PC-9 (cell line): ENCODE measurements at regions of chr7 and their contacts with region 1.

Region 1: GRCh38 chr7:13920053-13920697 is 69.3 kb downstream of the ETV1 start:
- DNase-seq: peak; percentile 69 to 100
- H3K4me3 ChIP-seq: peak overlapping the region; percentile 7; the same call in 1 of the 2 replicates
- H3K27ac ChIP-seq: peak overlapping the region; percentile 76
- H3K4me1 ChIP-seq: peaks cover 20% of the 10 kb centered on the region
- H3K27me3 ChIP-seq: no peaks in the 10 kb centered on the region
- CTCF ChIP-seq: no peak

Region 2: DNA sequence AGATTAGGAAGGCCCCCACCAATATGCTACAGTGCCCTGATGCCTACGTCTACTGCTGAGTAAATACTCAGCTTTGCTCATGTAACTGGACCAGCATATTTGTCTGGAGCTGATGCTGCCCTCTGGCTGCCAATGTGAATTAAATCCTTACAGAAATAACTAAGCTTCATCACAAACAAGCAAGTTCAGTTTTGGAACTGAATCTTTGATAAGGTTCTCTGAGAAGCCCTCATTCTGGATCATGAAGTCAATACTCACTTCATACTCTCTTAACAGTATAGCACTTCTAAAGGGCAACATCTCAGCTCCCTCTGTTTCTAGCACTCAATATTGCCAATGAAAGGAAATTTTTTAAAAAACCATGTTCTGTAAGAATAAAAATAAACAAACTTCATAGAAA is 177.4 kb before region 1 on chr7:
- CTCF ChIA-PET with region 1: no interaction called
- POLR2A ChIA-PET with region 1: no interaction called
- intact Hi-C with region 1: loop called (anchors 1 kb)
- DNase-seq: peak in 1 of 2 experiments; percentile 23
- H3K4me3 ChIP-seq: no peak overlapping the region
- H3K27ac ChIP-seq: no peak overlapping the region
- H3K4me1 ChIP-seq: no peaks in the 10 kb centered on the region
- H3K27me3 ChIP-seq: no peaks in the 10 kb centered on the region
- CTCF ChIP-seq: peak; percentile 64; the same call in 1 of the 2 replicates

Region 3: GRCh38 chr7:13850185-13850752 is 69.9 kb before region 1 on chr7:
- CTCF ChIA-PET with region 1: no interaction called
- POLR2A ChIA-PET with region 1: no interaction called
- intact Hi-C with region 1: loop called (anchors 1 kb)
- DNase-seq: peak; percentile 51 to 91
- H3K4me3 ChIP-seq: no peak overlapping the region
- H3K27ac ChIP-seq: peak overlapping the region; percentile 33
- H3K4me1 ChIP-seq: peaks cover 11% of the 10 kb centered on the region
- H3K27me3 ChIP-seq: no peaks in the 10 kb centered on the region
- CTCF ChIP-seq: no peak

Region 4: GRCh38 chr7:13860734-13861133 is 59.4 kb before region 1 on chr7:
- CTCF ChIA-PET with region 1: no interaction called
- POLR2A ChIA-PET with region 1: no interaction called
- intact Hi-C with region 1: no loop called
- DNase-seq: no peak
- H3K4me3 ChIP-seq: no peak overlapping the region
- H3K27ac ChIP-seq: no peak overlapping the region
- H3K4me1 ChIP-seq: no peaks in the 10 kb centered on the region
- H3K27me3 ChIP-seq: no peaks in the 10 kb centered on the region
- CTCF ChIP-seq: no peak

Region 5: DNA sequence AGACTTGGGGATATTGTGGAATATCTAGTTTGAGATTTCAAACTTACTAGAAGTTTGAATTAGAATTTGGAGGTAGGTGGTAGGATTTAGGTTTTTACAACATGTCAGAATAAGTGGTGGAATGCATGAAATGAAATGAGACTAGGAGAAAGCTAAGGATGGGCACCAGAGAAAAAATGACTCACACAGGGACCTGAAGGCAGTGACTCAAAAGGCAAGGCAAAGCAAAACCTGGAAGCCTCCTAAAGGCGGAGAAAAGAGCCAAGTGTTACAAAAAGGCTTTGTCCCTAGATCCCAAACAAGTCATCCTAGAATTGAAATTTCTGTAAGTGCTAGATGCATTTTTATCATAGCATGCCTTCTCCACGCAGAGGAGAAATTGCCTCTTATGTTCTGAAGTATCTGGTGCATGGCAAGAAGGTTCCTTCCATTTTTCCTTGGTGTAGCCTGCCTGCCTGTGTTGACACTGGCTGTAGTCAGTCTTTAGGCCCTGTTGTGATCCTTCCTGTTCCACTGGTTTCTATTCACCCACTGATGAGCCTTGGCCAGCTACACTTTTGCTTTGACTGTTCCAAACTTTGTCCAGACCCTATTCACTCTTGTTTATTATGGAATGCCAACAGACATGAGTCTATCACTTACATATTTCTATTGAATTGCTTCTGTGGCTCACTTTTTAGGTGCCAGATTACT is 40.0 kb before region 1 on chr7:
- CTCF ChIA-PET with region 1: no interaction called
- POLR2A ChIA-PET with region 1: no interaction called
- intact Hi-C with region 1: loop called (anchors 1 kb)
- DNase-seq: peak; percentile 44 to 49
- H3K4me3 ChIP-seq: no peak overlapping the region
- H3K27ac ChIP-seq: no peak overlapping the region
- H3K4me1 ChIP-seq: 0 out of 2 replicates have a peak, but pooled peaks cover 4% of the 10 kb centered on the region
- H3K27me3 ChIP-seq: no peaks in the 10 kb centered on the region
- CTCF ChIP-seq: no peak

Region 6: GRCh38 chr7:13981070-13981469 is 60.9 kb after region 1 on chr7:
- CTCF ChIA-PET with region 1: no interaction called
- POLR2A ChIA-PET with region 1: no interaction called
- intact Hi-C with region 1: loop called (anchors 1 kb)
- DNase-seq: peak; percentile 72 to 89
- H3K4me3 ChIP-seq: no peak overlapping the region
- H3K27ac ChIP-seq: no peak overlapping the region
- H3K4me1 ChIP-seq: peaks cover 14% of the 10 kb centered on the region; the same call in 1 of the 2 replicates
- H3K27me3 ChIP-seq: no peaks in the 10 kb centered on the region
- CTCF ChIP-seq: no peak

Region 7: GRCh38 chr7:14457568-14458453 is 537.6 kb after region 1 on chr7:
- CTCF ChIA-PET with region 1: no interaction called
- POLR2A ChIA-PET with region 1: interaction called, 11 read pairs
- intact Hi-C with region 1: no loop called
- DNase-seq: peak; percentile 66 to 68
- H3K4me3 ChIP-seq: peak overlapping the region; percentile 6; the same call in 1 of the 2 replicates
- H3K27ac ChIP-seq: no peak overlapping the region
- H3K4me1 ChIP-seq: no peaks in the 10 kb centered on the region
- H3K27me3 ChIP-seq: no peaks in the 10 kb centered on the region
- CTCF ChIP-seq: peak; percentile 98

Region 8: DNA sequence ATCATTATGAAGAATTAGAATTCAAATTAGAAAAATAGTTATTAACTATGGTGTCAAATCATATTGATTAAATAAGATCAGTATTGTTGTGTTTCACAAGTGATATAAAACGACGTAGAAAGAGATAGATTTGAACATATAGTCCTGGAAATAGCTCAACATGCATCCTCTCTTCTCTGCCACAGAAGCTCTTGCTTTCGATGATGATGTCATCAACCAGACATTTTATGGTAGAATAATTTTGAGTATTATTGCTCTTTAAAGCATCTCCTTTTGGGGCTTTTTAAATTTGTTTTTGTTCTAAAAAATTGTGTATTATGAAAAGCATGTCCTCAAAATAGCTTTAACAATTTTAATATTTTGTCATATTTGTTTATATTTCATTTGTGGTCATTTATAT is 887.3 kb after region 1 on chr7:
- CTCF ChIA-PET with region 1: no interaction called
- POLR2A ChIA-PET with region 1: no interaction called
- intact Hi-C with region 1: no loop called
- DNase-seq: no peak
- H3K4me3 ChIP-seq: no peak overlapping the region
- H3K27ac ChIP-seq: no peak overlapping the region
- H3K4me1 ChIP-seq: no peaks in the 10 kb centered on the region
- H3K27me3 ChIP-seq: no peaks in the 10 kb centered on the region
- CTCF ChIP-seq: no peak

Region 9: DNA sequence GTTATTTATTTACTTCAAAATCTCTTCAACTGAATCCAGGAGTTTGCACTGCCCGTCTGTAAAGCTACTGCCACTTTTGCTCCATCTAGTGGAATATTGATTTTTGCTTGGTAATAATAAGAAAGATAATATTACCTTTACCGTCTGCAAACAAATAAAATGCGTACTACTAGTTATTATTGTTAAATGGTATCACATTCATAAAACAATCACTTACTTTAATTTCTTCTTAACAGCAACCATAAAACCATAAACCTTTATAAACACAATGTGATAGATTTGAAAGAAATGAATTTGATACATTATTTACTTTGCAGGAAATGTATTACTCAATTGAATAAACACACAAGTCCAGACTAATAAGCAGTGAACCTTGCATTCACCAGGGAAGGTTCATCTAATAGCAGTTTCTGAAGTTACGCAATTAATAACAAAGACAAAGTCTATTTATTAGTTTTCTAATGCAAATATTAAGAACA is 1635.2 kb after region 1 on chr7:
- CTCF ChIA-PET with region 1: no interaction called
- POLR2A ChIA-PET with region 1: no interaction called
- intact Hi-C with region 1: no loop called
- DNase-seq: no peak
- H3K4me3 ChIP-seq: no peak overlapping the region
- H3K27ac ChIP-seq: no peak overlapping the region
- H3K4me1 ChIP-seq: no peaks in the 10 kb centered on the region
- H3K27me3 ChIP-seq: no peaks in the 10 kb centered on the region
- CTCF ChIP-seq: 0 out of 2 replicates have a peak, but pooled peaks have one; percentile 27